Activated CD8-positive, alpha-beta T cell treated with anti-CD3 and anti-CD28 coated beads, Interleukin-2, amount 10 ng/mL, durations not matched to agents 7 days and 5 days (primary cell): ENCODE measurements at regions of chr22 and their contacts with region 1.

Region 1: DNA sequence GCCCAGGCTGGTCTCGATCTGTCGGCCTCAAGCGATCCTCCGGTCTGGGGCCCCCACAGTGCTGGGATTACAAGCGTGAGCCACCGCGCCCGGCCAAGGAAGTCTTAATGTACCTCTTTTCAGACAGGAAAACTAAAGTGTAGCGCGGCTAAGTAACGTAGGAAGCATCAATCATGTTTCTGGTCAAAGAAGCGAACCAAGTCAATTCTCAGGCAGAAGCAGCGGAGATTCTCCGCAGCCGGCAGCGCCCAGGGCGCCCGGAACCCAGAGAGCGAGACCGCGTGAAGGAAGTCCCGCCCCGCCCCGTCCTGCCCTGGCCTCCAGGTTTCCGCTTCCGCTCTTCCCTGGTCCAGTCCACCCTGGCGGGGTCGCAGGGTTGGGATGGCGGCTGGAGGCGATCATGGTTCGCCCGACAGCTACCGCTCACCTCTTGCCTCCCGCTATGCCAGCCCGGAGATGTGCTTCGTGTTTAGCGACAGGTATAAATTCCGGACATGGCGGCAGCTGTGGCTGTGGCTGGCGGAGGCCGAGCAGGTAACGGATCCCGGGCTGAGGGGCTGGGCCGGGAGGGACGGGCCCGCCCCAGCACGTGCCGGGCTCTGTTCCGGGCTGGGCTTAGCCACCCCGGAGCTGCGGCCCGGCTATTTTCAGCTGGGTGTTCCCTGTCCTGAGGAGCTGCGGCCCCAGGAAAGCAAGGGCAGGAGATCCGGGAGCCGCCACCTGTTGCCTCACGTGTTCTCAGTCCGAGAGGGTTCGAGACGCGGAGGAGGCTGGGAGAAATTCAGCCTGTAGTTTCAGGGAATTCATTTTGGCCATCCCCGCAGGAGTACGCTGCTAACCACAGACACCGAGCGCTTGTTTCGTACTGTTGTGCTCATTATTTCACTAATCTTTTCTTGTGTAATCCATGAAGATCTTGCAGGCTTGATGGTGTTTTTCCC is at the start of gene ADSL:
- DNase-seq: peak; percentile 90
- ATAC-seq: peak; percentile 91
- H3K4me3 Mint-ChIP-seq: peak within 1 kb of the TSS; percentile 94
- H3K27ac Mint-ChIP-seq: peak within 1 kb of the TSS; percentile 97
- H3K4me1 Mint-ChIP-seq: peaks cover 52% of the 10 kb centered on the region
- H3K27me3 Mint-ChIP-seq: no peaks in the 10 kb centered on the region
- total RNA-seq, gene ADSL: 109 to 118 TPM

Region 2: DNA sequence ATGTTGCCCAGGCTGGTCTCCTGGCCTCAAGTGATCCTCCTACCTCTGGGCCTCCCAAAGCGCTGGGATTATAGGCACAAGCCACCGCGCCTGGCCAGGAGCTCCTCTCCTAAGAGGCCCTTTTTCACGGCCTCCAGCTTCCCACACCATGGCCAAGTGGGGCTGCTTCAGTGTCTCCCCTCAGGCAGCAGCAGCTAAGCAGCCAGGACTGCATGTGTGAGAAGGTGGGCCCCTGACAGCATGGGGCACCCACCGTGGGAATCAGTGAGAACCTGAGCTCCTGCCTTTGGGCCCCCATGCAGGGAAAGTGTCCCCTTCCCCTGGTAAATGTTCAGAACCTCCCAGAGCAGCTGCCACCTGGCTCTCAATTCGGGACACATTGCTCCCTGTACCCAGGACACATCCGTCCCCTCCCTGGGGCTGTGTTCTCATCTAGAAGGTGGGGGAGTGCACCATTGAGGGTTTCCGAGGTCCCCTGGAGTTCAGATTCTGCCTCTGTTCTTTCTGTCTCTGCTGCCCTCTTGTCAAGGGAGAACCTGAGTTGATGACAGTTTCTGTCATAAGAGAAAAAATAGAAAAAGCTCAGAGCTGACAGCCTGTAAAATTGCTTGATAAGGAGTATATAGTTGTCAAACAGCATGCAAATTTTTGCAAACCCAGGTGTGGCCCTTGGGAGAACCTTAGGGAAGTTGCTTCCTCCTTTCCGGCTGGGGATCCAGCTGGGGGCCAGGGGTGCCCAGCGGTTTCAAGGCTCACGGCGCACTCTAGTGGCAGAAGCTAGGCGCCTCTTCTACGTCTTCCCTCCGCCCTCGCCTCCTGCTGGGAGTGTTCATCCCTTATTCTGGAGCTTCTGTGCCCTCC is 322.0 kb before region 1 on chr22:
- CTCF ChIA-PET with region 1: interaction called, 13 read pairs
- POLR2A ChIA-PET with region 1: no interaction called
- DNase-seq: peak; percentile 74
- ATAC-seq: peak; percentile 84
- H3K4me3 Mint-ChIP-seq: no peak overlapping the region
- H3K27ac Mint-ChIP-seq: no peak overlapping the region
- H3K4me1 Mint-ChIP-seq: peaks cover 6% of the 10 kb centered on the region
- H3K27me3 Mint-ChIP-seq: no peaks in the 10 kb centered on the region

Region 3: DNA sequence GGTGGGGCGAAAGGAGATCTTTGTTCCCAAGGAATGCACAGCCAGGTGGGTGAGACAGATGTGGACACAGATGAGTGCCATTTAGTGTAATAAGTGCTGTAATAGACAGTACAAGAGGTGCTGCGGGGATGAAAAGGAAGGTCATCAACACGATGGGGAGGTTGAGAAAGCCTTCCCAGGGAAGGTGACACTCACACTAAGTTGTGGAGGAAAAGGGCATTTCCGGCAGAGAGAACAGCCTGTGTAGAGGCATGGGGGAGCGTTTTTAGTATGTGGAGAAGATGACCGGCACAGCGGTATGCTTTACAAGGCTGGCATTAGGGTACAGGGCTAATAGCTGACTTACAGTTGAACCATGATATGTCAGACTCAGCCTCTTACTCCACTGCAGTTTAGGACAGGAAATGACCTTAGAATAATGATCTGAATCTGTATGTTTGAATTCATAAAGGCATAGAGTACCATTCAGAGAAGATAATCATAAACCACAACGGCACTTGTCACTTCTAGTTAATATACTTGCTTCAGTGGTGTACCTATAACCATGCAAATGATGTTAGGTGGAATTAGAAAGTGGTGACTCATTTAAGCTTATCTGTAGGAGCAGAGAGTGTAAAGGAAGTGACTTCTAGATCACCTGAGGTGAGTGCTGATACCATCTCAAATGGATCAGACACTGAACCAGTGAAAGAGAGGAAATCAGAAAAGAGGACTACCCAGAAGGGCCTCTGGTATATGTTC is 291.1 kb before region 1 on chr22:
- CTCF ChIA-PET with region 1: interaction called, 20 read pairs
- POLR2A ChIA-PET with region 1: interaction called, 3 read pairs
- DNase-seq: peak; percentile 46
- ATAC-seq: peak; percentile 94
- H3K4me3 Mint-ChIP-seq: peak overlapping the region; percentile 55
- H3K27ac Mint-ChIP-seq: peak overlapping the region; percentile 92
- H3K4me1 Mint-ChIP-seq: peaks cover 78% of the 10 kb centered on the region
- H3K27me3 Mint-ChIP-seq: no peaks in the 10 kb centered on the region

Region 4: DNA sequence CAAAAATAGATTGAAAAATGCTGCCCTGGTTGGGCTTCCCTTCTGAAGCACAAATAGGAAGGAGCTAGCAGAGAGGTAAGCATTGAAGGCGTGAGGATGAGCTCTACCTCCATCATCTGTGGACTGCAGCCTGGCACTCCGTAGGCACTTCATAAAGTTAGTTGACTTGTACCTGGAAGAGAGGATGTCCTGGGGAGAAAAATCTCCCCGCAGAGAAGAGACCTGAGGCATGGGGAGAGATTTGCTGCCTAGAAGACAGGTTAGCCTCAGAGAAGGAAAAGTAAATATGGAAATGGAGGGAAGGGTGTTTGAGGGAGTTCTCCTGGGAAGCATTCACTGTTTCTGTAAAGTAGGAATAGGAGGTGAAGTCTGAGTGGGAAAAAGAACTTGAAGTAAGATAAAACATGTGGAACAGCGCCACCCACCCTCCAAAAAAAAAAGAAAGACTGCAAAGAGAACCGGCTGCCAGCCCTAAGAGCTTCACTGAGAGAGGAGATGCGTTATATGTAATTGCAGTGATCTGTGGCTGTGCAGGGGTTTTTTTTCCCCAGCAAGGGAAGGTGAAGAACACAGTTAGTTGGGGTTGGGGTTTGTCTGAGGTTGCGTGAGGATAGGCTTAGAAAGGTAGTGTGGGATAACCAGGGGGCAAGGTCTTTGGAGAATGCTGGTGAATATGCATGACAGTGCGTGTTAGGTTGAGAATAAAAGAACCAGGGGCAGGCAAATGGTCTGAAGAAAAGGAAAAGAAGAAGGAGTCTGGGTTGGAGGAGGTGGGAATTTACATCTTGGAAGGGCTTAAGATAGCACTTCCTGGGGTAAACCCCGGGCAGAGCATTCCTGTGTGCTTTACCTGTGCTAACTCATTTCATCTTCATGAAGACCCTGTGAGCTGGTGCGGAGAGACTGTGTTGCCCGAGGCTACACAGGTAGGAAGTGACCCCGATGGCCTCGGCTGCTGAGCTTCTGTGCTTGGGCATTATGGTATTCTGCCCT is 152.7 kb before region 1 on chr22:
- CTCF ChIA-PET with region 1: interaction called, 20 read pairs
- POLR2A ChIA-PET with region 1: interaction called, 4 read pairs
- DNase-seq: no peak
- ATAC-seq: no peak
- H3K4me3 Mint-ChIP-seq: no peak overlapping the region
- H3K27ac Mint-ChIP-seq: peak overlapping the region; percentile 7
- H3K4me1 Mint-ChIP-seq: peaks cover 56% of the 10 kb centered on the region
- H3K27me3 Mint-ChIP-seq: no peaks in the 10 kb centered on the region

Region 5: GRCh38 chr22:40247976-40248375 is 98.5 kb before region 1 on chr22:
- CTCF ChIA-PET with region 1: interaction called, 12 read pairs
- POLR2A ChIA-PET with region 1: no interaction called
- DNase-seq: peak; percentile 83
- ATAC-seq: peak; percentile 94
- H3K4me3 Mint-ChIP-seq: peak overlapping the region; percentile 34
- H3K27ac Mint-ChIP-seq: peak overlapping the region; percentile 76
- H3K4me1 Mint-ChIP-seq: peaks cover 55% of the 10 kb centered on the region
- H3K27me3 Mint-ChIP-seq: no peaks in the 10 kb centered on the region

Region 6: GRCh38 chr22:40326905-40327735 is 19.3 kb before region 1 on chr22:
- CTCF ChIA-PET with region 1: interaction called, 29 read pairs
- POLR2A ChIA-PET with region 1: interaction called, 25 read pairs
- DNase-seq: no peak
- ATAC-seq: peak; percentile 24
- H3K4me3 Mint-ChIP-seq: no peak overlapping the region
- H3K27ac Mint-ChIP-seq: peak overlapping the region; percentile 55
- H3K4me1 Mint-ChIP-seq: peaks cover 93% of the 10 kb centered on the region
- H3K27me3 Mint-ChIP-seq: no peaks in the 10 kb centered on the region

Region 7: DNA sequence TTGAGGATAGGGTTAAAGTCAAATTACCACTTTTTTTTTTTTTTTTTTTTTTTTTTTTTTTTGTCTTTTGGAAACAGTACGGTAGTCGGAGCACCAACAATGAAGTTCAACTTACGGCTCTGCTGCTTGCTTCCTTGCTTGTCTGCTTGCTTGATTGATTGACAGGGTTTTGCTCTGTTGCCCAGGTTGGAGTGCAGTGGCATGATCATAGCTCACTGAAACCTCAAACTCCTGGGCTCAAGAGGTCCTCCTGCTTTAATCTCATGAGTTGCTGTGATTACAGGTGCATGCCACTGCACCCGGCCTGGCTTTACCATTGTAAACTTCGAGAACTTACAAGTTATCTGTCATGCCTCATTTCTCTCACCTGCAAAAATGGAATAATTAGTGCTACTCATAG is 29.7 kb after region 1 on chr22:
- CTCF ChIA-PET with region 1: no interaction called
- POLR2A ChIA-PET with region 1: no interaction called
- DNase-seq: no peak
- ATAC-seq: no peak
- H3K4me3 Mint-ChIP-seq: no peak overlapping the region
- H3K27ac Mint-ChIP-seq: no peak overlapping the region
- H3K4me1 Mint-ChIP-seq: peaks cover 23% of the 10 kb centered on the region
- H3K27me3 Mint-ChIP-seq: no peaks in the 10 kb centered on the region